GM23248 (cell line): ENCODE measurements at regions of chr16 and their contacts with region 1.

Region 1: GRCh38 chr16:10918294-10919002 is 23.8 kb downstream of the DEXI start:
- DNase-seq: peak; percentile 92
- H3K4me3 ChIP-seq: no peak overlapping the region
- H3K27ac ChIP-seq: no peak overlapping the region
- H3K4me1 ChIP-seq: peaks cover 11% of the 10 kb centered on the region
- H3K27me3 ChIP-seq: no peaks in the 10 kb centered on the region

Region 2: GRCh38 chr16:10256784-10257641 is 661.4 kb before region 1 on chr16:
- in situ Hi-C with region 1: loop called (anchors 25 kb)
- DNase-seq: peak; percentile 51
- H3K4me3 ChIP-seq: no peak overlapping the region
- H3K27ac ChIP-seq: no peak overlapping the region
- H3K4me1 ChIP-seq: no peaks in the 10 kb centered on the region
- H3K27me3 ChIP-seq: no peaks in the 10 kb centered on the region

Region 3: GRCh38 chr16:10509534-10510025 is 408.9 kb before region 1 on chr16:
- in situ Hi-C with region 1: loop called (anchors 10 kb)
- DNase-seq: peak; percentile 85
- H3K4me3 ChIP-seq: no peak overlapping the region
- H3K27ac ChIP-seq: no peak overlapping the region
- H3K4me1 ChIP-seq: no peaks in the 10 kb centered on the region
- H3K27me3 ChIP-seq: no peaks in the 10 kb centered on the region

Region 4: DNA sequence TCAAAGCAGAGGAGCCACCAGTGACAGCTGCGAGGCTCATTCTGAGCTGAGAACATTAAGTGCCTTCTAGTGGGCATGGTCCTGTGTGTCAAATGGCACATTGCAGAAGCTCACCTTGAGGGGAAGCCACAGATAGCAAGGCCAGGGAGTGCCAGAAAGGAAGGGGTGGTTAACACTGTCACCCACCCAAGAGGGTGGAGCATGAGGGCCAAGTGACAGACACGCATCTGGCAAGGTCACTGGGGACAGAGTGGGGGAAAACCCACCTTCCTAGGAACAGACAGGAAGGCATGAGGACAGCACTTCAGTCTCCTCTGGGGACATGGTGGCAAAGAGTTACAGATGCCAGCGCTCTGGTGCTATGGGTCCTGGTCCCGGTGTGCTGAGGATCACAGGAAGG is 152.7 kb before region 1 on chr16:
- in situ Hi-C with region 1: loop called (anchors 10 kb)
- DNase-seq: no peak
- H3K4me3 ChIP-seq: no peak overlapping the region
- H3K27ac ChIP-seq: no peak overlapping the region
- H3K4me1 ChIP-seq: no peaks in the 10 kb centered on the region
- H3K27me3 ChIP-seq: no peaks in the 10 kb centered on the region

Region 5: GRCh38 chr16:11312718-11313492 is 394.5 kb after region 1 on chr16:
- in situ Hi-C with region 1: no loop called
- DNase-seq: peak; percentile 47
- H3K4me3 ChIP-seq: no peak overlapping the region
- H3K27ac ChIP-seq: no peak overlapping the region
- H3K4me1 ChIP-seq: peaks cover 20% of the 10 kb centered on the region
- H3K27me3 ChIP-seq: no peaks in the 10 kb centered on the region

Region 6: GRCh38 chr16:12043953-12044352 is 1125.5 kb after region 1 on chr16:
- in situ Hi-C with region 1: no loop called
- DNase-seq: no peak
- H3K4me3 ChIP-seq: no peak overlapping the region
- H3K27ac ChIP-seq: no peak overlapping the region
- H3K4me1 ChIP-seq: no peaks in the 10 kb centered on the region
- H3K27me3 ChIP-seq: no peaks in the 10 kb centered on the region